ENCODE measurements at regions of chr10 and their contacts with region 1.

Region 1: GRCh38 chr10:68871731-68872342 is 29.3 kb upstream of the DDX50 start:
- DNase-seq: peak; percentile 95
- ATAC-seq: peak; percentile 67
- H3K4me3 ChIP-seq: no peak overlapping the region
- H3K27ac ChIP-seq: no peak overlapping the region
- H3K4me1 ChIP-seq: peaks cover 5% of the 10 kb centered on the region
- H3K27me3 ChIP-seq: no peaks in the 10 kb centered on the region
- CTCF ChIP-seq: no peak
- POLR2A ChIP-seq: no peak
- RAD21 ChIP-seq: no peak

Region 2: DNA sequence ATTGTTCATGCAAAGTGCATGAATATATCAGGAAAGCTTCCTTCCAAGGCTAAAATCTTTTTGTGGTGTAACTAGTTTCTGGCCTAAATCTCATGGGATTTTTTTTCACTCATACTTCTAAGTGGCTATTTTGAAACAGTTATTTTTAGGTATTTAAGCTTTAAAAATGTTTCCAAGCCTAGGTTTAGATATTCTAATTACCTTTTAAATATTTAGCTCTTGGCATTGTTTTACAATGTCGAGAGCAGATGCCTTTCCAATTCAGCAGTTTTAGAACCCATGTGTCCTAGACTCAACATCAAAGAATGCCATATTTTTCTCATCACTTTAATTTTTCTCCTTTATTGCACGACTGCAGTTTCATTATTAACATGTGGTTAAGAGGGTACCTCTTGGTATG is 71.6 kb before region 1 on chr10:
- CTCF ChIA-PET with region 1: no interaction called
- POLR2A ChIA-PET with region 1: no interaction called
- dilution Hi-C with region 1: no loop called
- in situ Hi-C with region 1: no loop called
- intact Hi-C with region 1: loop called (anchors 5 kb)
- DNase-seq: no peak
- ATAC-seq: no peak
- H3K4me3 ChIP-seq: no peak overlapping the region
- H3K27ac ChIP-seq: no peak overlapping the region
- H3K4me1 ChIP-seq: no peaks in the 10 kb centered on the region
- H3K27me3 ChIP-seq: no peaks in the 10 kb centered on the region
- CTCF ChIP-seq: no peak
- POLR2A ChIP-seq: no peak
- RAD21 ChIP-seq: no peak

Region 3: GRCh38 chr10:68826764-68827591 is 44.9 kb before region 1 on chr10 and contains the start of gene STOX1:
- CTCF ChIA-PET with region 1: no interaction called
- POLR2A ChIA-PET with region 1: interaction called, 13 read pairs
- dilution Hi-C with region 1: no loop called
- in situ Hi-C with region 1: no loop called
- intact Hi-C with region 1: no loop called
- DNase-seq: peak; percentile 51
- ATAC-seq: peak; percentile 93
- H3K4me3 ChIP-seq: peak within 1 kb of the TSS; percentile 68
- H3K27ac ChIP-seq: no peak within 1 kb of the TSS
- H3K4me1 ChIP-seq: peaks cover 2% of the 10 kb centered on the region; the same call in 1 of the 2 replicates
- H3K27me3 ChIP-seq: peaks cover 37% of the 10 kb centered on the region
- CTCF ChIP-seq: no peak
- POLR2A ChIP-seq: no peak
- RAD21 ChIP-seq: no peak
- total RNA-seq, gene STOX1: under 0.01 and 0.18 TPM in 2 replicates

Region 4: DNA sequence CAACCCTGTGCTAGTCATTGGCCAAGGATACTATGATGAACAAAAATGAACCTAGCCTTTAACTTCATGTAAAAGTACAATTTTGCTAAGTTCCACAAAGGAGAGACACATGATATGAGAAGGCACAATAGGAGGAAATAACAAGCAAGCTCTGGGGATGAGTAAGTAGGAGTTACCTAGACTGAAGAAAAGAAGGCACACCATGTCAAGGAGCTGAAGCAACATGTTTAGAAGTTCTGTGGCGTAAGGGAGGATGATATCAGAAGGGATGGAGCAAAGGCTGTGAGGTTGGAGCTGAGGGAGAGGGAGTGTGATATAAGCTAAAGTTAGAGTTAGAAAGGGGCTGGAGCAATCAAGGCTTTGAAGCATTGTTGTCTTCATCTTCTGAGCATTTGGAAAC is 142.3 kb after region 1 on chr10:
- CTCF ChIA-PET with region 1: no interaction called
- POLR2A ChIA-PET with region 1: interaction called, 22 read pairs
- dilution Hi-C with region 1: no loop called
- in situ Hi-C with region 1: no loop called
- intact Hi-C with region 1: no loop called
- DNase-seq: peak; percentile 66
- ATAC-seq: peak; percentile 29; the same call in 1 of the 2 replicates
- H3K4me3 ChIP-seq: no peak overlapping the region
- H3K27ac ChIP-seq: peak overlapping the region; percentile 16; the same call in 1 of the 2 replicates
- H3K4me1 ChIP-seq: no peaks in the 10 kb centered on the region
- H3K27me3 ChIP-seq: no peaks in the 10 kb centered on the region
- CTCF ChIP-seq: no peak
- POLR2A ChIP-seq: no peak
- RAD21 ChIP-seq: no peak

Region 5: GRCh38 chr10:69215405-69216176 is 343.8 kb after region 1 on chr10:
- CTCF ChIA-PET with region 1: no interaction called
- POLR2A ChIA-PET with region 1: no interaction called
- dilution Hi-C with region 1: no loop called
- in situ Hi-C with region 1: no loop called
- intact Hi-C with region 1: no loop called
- DNase-seq: no peak
- ATAC-seq: no peak
- H3K4me3 ChIP-seq: no peak overlapping the region
- H3K27ac ChIP-seq: no peak overlapping the region
- H3K4me1 ChIP-seq: no peaks in the 10 kb centered on the region
- H3K27me3 ChIP-seq: no peaks in the 10 kb centered on the region
- CTCF ChIP-seq: no peak
- POLR2A ChIP-seq: no peak
- RAD21 ChIP-seq: no peak

Region 6: DNA sequence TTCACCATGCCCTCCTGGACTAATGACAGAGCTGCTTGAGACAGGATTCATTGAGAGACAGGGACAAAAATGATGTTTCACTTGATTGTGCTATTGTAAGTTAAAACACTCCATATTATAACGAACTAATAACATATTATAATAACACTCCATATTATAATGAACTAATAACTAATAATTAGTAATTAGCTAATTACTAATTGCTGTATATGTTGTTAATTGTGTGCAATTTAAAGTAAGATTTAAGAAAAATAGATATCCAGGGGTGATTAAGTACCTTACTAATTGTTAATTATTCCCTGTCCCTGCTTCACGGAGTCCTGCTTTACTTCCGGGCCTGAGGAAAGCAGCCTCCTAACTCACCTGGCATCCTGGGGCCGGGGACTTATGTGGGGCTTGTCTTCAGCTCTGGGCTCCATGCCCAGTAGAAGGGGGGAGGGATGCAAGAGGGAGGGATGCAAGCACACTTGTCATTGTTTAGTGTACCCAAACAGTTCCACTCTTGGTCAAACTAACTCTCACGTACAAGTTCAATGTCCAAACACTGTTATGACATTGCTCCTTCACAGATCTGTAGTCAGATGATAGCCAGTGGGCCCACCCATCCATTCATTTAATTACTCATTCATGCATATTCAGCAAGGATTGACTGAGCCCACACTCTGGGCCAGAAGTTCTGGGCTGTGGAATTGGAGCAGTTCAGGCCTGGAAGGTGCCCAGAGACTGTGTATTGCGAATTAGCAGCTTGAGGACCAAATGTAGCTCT is 983.7 kb after region 1 on chr10:
- CTCF ChIA-PET with region 1: no interaction called
- POLR2A ChIA-PET with region 1: no interaction called
- dilution Hi-C with region 1: no loop called
- in situ Hi-C with region 1: no loop called
- intact Hi-C with region 1: no loop called
- DNase-seq: no peak
- ATAC-seq: no peak
- H3K4me3 ChIP-seq: no peak overlapping the region
- H3K27ac ChIP-seq: no peak overlapping the region
- H3K4me1 ChIP-seq: no peaks in the 10 kb centered on the region; the same call in 1 of the 2 replicates
- H3K27me3 ChIP-seq: no peaks in the 10 kb centered on the region
- CTCF ChIP-seq: no peak
- POLR2A ChIP-seq: no peak
- RAD21 ChIP-seq: no peak